ENCODE measurements at regions of chrX and their contacts with region 1.

Region 1: GRCh38 chrX:19334945-19335626 is 8.6 kb upstream of the PDHA1 start:
- DNase-seq: no peak
- ATAC-seq: no peak
- H3K4me3 ChIP-seq: no peak overlapping the region
- H3K27ac ChIP-seq: no peak overlapping the region
- H3K4me1 ChIP-seq: peaks cover 0 to 5% of the 10 kb centered on the region in 2 donors
- H3K27me3 ChIP-seq: no peaks in the 10 kb centered on the region
- CTCF ChIP-seq: peak in 1 of 5 experiments; percentile 15
- POLR2A ChIP-seq: no peak

Region 2: DNA sequence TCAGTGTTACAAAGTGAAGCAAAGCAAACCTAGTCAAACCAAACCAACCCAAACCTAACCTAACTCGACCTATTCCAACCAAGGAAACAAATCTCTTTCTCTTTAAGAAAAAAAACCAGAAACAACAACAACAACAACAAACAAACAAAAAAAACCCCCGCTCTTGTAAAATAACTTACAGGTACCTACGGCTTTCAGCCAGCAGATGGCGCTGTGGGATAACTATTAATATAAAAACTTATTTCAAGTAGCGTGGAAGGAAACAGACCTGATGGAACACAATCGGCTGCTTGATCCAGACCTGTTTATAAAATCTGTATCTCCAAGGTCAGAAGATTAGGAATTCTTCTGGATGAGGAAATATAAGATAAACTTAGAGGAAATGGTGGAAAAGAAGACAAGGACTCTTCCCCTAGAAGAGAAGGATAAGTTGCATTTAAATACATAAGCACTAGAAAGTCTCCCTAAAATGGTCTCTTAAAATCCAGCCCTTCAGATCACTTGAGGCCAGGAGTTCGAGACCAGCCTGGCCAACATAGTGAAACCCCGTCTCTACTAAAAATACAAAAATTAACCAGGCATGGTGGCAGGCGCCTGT is 944.0 kb before region 1 on chrX:
- in situ Hi-C with region 1: loop called (anchors 10 to 25 kb)
- intact Hi-C with region 1: loop called (anchors 5 kb)
- DNase-seq: peak; percentile 11 to 34
- ATAC-seq: peak; percentile 36 to 45
- H3K4me3 ChIP-seq: no peak overlapping the region
- H3K27ac ChIP-seq: no peak overlapping the region
- H3K4me1 ChIP-seq: no peaks in the 10 kb centered on the region
- H3K27me3 ChIP-seq: no peaks in the 10 kb centered on the region
- CTCF ChIP-seq: peak; percentile 43 to 83 (median 70)
- POLR2A ChIP-seq: no peak

Region 3: GRCh38 chrX:21047034-21047455 is 1712.0 kb after region 1 on chrX:
- in situ Hi-C with region 1: no loop called
- intact Hi-C with region 1: no loop called
- DNase-seq: no peak
- ATAC-seq: no peak
- H3K4me3 ChIP-seq: no peak overlapping the region
- H3K27ac ChIP-seq: no peak overlapping the region
- H3K4me1 ChIP-seq: no peaks in the 10 kb centered on the region
- H3K27me3 ChIP-seq: no peaks in the 10 kb centered on the region
- CTCF ChIP-seq: no peak
- POLR2A ChIP-seq: no peak